CD8-positive, alpha-beta T cell (primary cell): ENCODE measurements at regions of chr15 and their contacts with region 1.

Region 1: GRCh38 chr15:52331490-52332240 is 36.1 kb upstream of the MYO5C start:
- DNase-seq: peak in 8 of 9 experiments; percentile 25 to 84 (median 44)
- ATAC-seq: peak; percentile 99
- H3K4me3 ChIP-seq: no peak overlapping the region
- H3K4me3 Mint-ChIP-seq: no peak overlapping the region
- H3K27ac ChIP-seq: peak overlapping the region in 1 of 2 experiments; percentile 14
- H3K27ac Mint-ChIP-seq: peak overlapping the region; percentile 45
- H3K4me1 ChIP-seq: peaks cover 10% of the 10 kb centered on the region
- H3K4me1 Mint-ChIP-seq: peaks cover 12% of the 10 kb centered on the region
- H3K27me3 ChIP-seq: no peaks in the 10 kb centered on the region
- H3K27me3 Mint-ChIP-seq: no peaks in the 10 kb centered on the region
- CTCF ChIP-seq: peak; percentile 63

Region 2: GRCh38 chr15:52183562-52184173 is 148.0 kb before region 1 on chr15:
- CTCF ChIA-PET with region 1: no interaction called
- POLR2A ChIA-PET with region 1: no interaction called
- intact Hi-C with region 1: no loop called
- DNase-seq: peak in 3 of 9 experiments; percentile 45 to 59 (median 46)
- ATAC-seq: no peak
- H3K4me3 ChIP-seq: no peak overlapping the region
- H3K4me3 Mint-ChIP-seq: no peak overlapping the region
- H3K27ac ChIP-seq: no peak overlapping the region
- H3K27ac Mint-ChIP-seq: no peak overlapping the region
- H3K4me1 ChIP-seq: peaks cover 10% of the 10 kb centered on the region
- H3K4me1 Mint-ChIP-seq: peaks cover 16% of the 10 kb centered on the region
- H3K27me3 ChIP-seq: no peaks in the 10 kb centered on the region
- H3K27me3 Mint-ChIP-seq: no peaks in the 10 kb centered on the region
- CTCF ChIP-seq: peak; percentile 34

Region 3: GRCh38 chr15:52256366-52256765 is 75.3 kb before region 1 on chr15:
- CTCF ChIA-PET with region 1: interaction called, 9 read pairs
- POLR2A ChIA-PET with region 1: no interaction called
- intact Hi-C with region 1: loop called (anchors 1 to 5 kb)
- DNase-seq: peak; percentile 51 to 87 (median 74)
- ATAC-seq: peak; percentile 93
- H3K4me3 ChIP-seq: no peak overlapping the region
- H3K4me3 Mint-ChIP-seq: peak overlapping the region; percentile 71
- H3K27ac ChIP-seq: no peak overlapping the region
- H3K27ac Mint-ChIP-seq: no peak overlapping the region
- H3K4me1 ChIP-seq: peaks cover 13% of the 10 kb centered on the region
- H3K4me1 Mint-ChIP-seq: peaks cover 18% of the 10 kb centered on the region
- H3K27me3 ChIP-seq: no peaks in the 10 kb centered on the region
- H3K27me3 Mint-ChIP-seq: no peaks in the 10 kb centered on the region
- CTCF ChIP-seq: peak; percentile 65

Region 4: DNA sequence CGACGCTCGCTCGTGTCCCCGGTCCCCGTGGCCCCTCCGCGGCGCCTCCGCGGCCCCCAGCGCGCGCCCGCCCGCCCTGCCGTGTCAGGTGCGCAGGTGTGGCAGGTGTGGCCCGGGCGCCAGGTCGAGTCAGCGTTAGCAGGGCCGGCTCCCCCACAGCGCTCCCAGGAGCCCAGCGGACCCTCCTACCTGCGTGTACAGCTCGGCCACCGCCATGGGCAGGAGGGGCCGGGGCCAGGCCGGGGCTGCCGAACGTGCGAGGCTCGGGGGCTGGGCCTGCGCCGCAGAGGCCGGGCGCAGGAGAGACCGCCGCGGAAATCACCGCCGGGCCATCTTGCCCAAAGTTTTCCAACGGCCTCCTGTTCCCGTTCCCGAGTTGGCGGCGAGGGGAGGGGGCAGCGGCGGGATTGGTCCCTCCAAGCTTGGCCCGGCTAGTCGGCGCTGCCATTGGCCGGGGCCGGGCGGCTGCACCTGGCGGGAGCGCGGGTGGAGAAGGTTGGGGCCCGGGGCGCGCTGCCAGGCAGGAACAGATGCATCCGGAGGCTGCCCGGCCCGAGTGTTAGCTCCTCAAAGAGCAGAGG is 36.2 kb before region 1 on chr15 and contains the start of gene MYO5C:
- CTCF ChIA-PET with region 1: no interaction called
- POLR2A ChIA-PET with region 1: no interaction called
- intact Hi-C with region 1: no loop called
- DNase-seq: peak in 1 of 9 experiments; percentile 31
- ATAC-seq: no peak
- H3K4me3 ChIP-seq: peak within 1 kb of the TSS in 1 of 2 experiments; percentile 31
- H3K4me3 Mint-ChIP-seq: peak within 1 kb of the TSS; percentile 42
- H3K27ac ChIP-seq: no peak within 1 kb of the TSS
- H3K27ac Mint-ChIP-seq: no peak within 1 kb of the TSS
- H3K4me1 ChIP-seq: peaks cover 11% of the 10 kb centered on the region
- H3K4me1 Mint-ChIP-seq: peaks cover 4% of the 10 kb centered on the region
- H3K27me3 ChIP-seq: peaks cover 3 to 10% of the 10 kb centered on the region in 2 experiments
- H3K27me3 Mint-ChIP-seq: peaks cover 35% of the 10 kb centered on the region
- CTCF ChIP-seq: no peak
- total RNA-seq, gene MYO5C: 0.24 to 0.31 TPM

Region 5: GRCh38 chr15:52370010-52370409 is 38.3 kb after region 1 on chr15:
- CTCF ChIA-PET with region 1: no interaction called
- POLR2A ChIA-PET with region 1: no interaction called
- intact Hi-C with region 1: no loop called
- DNase-seq: no peak
- ATAC-seq: no peak
- H3K4me3 ChIP-seq: no peak overlapping the region
- H3K4me3 Mint-ChIP-seq: no peak overlapping the region
- H3K27ac ChIP-seq: no peak overlapping the region
- H3K27ac Mint-ChIP-seq: no peak overlapping the region
- H3K4me1 ChIP-seq: no peaks in the 10 kb centered on the region
- H3K4me1 Mint-ChIP-seq: no peaks in the 10 kb centered on the region
- H3K27me3 ChIP-seq: no peaks in the 10 kb centered on the region
- H3K27me3 Mint-ChIP-seq: no peaks in the 10 kb centered on the region
- CTCF ChIP-seq: no peak

Region 6: DNA sequence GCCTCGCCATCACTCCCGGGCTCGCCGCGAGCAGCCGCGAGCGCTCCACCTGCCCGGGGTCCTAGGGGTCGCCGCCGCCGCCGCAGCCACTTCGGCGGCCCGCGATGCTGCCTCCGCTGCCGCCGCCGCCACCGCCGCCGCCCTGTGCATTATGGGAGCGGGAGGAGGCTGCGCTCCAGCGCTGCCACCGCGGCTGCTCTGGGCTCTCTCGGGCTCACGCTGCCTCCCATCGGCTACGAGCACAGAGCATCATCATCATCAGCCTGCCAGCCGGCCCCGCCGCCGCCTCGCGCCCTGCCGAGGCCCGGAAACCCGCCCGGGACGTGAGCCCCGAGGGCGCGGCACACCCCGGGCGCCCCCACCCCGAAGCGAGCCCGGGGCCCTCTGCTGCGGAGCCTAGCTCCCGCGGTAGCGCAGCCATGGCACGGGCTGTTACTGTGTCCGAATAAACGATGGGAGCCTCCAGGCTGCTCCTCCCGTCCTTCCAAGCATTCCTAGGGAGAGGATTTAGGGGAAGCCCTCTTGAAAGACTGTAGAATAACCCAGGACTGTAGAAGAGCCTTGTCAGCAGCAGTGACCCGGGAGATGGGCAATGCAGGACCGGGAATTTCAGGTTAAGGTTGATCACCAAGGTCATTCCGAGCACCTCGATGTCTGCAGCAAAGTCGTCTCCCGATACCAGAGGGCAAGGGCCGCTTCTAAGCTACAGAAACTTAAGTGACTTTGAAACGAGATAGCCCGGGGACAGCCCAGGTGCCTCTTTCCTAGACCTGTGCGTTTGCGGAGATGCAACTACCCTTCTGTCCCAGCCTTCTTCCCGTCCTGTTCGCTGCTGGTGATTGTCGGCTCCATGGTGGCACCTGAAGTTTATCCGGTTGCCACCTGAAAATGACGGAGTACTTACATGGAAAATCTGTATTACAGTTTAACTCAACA is 197.6 kb after region 1 on chr15:
- CTCF ChIA-PET with region 1: no interaction called
- POLR2A ChIA-PET with region 1: interaction called, 4 read pairs
- intact Hi-C with region 1: loop called in 1 of 2 experiments (anchors 1 kb)
- DNase-seq: peak; percentile 59 to 92 (median 80)
- ATAC-seq: peak; percentile 86
- H3K4me3 ChIP-seq: peak overlapping the region; percentile 49 to 51
- H3K4me3 Mint-ChIP-seq: peak overlapping the region; percentile 84
- H3K27ac ChIP-seq: peak overlapping the region; percentile 61 to 78
- H3K27ac Mint-ChIP-seq: peak overlapping the region; percentile 87
- H3K4me1 ChIP-seq: peaks cover 14% of the 10 kb centered on the region
- H3K4me1 Mint-ChIP-seq: peaks cover 33% of the 10 kb centered on the region
- H3K27me3 ChIP-seq: no peaks in the 10 kb centered on the region
- H3K27me3 Mint-ChIP-seq: no peaks in the 10 kb centered on the region
- CTCF ChIP-seq: no peak

Region 7: DNA sequence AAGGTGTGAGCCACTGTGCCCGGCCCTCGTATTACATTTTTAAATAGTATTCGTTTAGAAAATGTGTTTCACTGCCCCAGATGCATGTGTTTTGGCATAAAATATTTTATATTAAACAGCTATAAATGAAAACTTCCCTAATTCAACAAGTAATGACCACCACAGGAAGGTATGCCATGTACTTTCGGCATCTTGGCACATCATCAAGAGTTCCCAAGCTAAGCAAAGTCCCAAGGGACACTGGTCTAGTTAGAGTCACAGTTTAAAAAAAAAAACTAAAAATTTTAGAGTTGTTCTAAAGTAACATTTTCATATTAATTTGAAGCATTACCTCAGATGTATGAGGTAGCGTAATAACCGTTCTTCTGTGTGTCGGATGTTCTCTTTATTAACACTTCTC is 252.7 kb after region 1 on chr15:
- CTCF ChIA-PET with region 1: interaction called, 3 read pairs
- POLR2A ChIA-PET with region 1: no interaction called
- intact Hi-C with region 1: loop called in 1 of 2 experiments (anchors 5 kb)
- DNase-seq: no peak
- ATAC-seq: no peak
- H3K4me3 ChIP-seq: no peak overlapping the region
- H3K4me3 Mint-ChIP-seq: no peak overlapping the region
- H3K27ac ChIP-seq: no peak overlapping the region
- H3K27ac Mint-ChIP-seq: no peak overlapping the region
- H3K4me1 ChIP-seq: no peaks in the 10 kb centered on the region
- H3K4me1 Mint-ChIP-seq: no peaks in the 10 kb centered on the region
- H3K27me3 ChIP-seq: no peaks in the 10 kb centered on the region
- H3K27me3 Mint-ChIP-seq: no peaks in the 10 kb centered on the region
- CTCF ChIP-seq: no peak

Region 8: DNA sequence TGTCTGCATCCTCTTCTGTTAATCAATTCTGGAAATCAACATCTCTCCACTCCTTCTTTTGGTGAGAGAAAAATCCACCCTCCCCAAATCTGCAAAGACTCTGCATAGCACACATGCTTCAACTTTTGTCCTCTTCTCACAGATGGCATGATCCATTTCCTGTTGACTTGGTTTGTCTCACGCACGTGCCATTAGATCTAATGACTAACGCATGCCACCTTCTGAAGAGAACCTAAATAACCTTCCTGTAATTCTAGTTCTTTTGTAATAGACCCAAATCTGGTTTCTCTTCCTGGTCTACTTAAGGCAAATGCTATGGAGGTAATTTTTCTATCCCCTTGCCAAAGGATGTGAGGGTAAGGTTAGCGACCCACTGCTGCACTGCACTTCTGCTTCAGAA is 398.5 kb after region 1 on chr15:
- CTCF ChIA-PET with region 1: interaction called, 58 read pairs
- POLR2A ChIA-PET with region 1: interaction called, 4 read pairs
- intact Hi-C with region 1: loop called (anchors 1 kb)
- DNase-seq: peak in 7 of 9 experiments; percentile 11 to 83 (median 63)
- ATAC-seq: peak; percentile 99
- H3K4me3 ChIP-seq: no peak overlapping the region
- H3K4me3 Mint-ChIP-seq: peak overlapping the region; percentile 3
- H3K27ac ChIP-seq: peak overlapping the region in 1 of 2 experiments; percentile 18
- H3K27ac Mint-ChIP-seq: peak overlapping the region; percentile 79
- H3K4me1 ChIP-seq: peaks cover 14% of the 10 kb centered on the region
- H3K4me1 Mint-ChIP-seq: peaks cover 15% of the 10 kb centered on the region
- H3K27me3 ChIP-seq: no peaks in the 10 kb centered on the region
- H3K27me3 Mint-ChIP-seq: no peaks in the 10 kb centered on the region
- CTCF ChIP-seq: peak; percentile 29